Activated naive CD4-positive, alpha-beta T cell treated with anti-CD3 and anti-CD28 coated beads for 36 hours (primary cell): ENCODE measurements at regions of chr11 and their contacts with region 1.

Region 1: DNA sequence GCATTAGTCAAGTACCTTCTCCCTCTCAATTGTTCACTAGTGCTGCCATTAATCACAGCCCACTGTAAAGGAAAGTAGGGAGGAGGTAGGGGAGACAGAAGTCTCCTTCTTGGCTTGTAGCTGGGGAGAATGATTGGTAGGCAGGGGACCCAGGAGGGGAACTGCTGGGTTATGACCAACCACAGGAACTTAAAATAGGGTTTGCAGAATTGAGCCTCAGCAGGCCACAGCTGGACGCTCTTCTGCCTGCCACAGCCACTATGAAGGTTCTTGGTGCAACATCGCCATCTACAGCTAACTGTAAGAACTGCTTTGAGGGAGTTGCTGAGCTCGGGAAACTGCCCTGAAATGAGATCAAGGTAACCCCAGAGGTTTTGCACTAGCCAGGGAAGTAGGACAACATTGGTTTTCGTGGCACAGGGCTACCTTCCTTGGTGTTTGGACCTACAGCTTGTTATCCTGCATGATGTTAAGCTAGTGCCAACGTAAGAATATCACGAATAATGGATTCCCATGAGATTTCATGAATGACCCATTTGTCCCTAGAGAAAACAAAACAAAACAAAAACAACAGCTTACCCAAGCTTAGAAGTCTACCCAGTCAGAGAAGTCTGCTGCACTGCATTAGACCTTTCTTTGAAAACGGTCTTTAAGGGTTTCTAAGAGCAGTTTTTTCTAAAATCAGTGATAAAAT is 787.1 kb upstream of the API5 start:
- DNase-seq: peak; percentile 49
- H3K4me3 Mint-ChIP-seq: no peak overlapping the region
- H3K27ac Mint-ChIP-seq: no peak overlapping the region
- H3K4me1 Mint-ChIP-seq: no peaks in the 10 kb centered on the region
- H3K27me3 Mint-ChIP-seq: no peaks in the 10 kb centered on the region

Region 2: DNA sequence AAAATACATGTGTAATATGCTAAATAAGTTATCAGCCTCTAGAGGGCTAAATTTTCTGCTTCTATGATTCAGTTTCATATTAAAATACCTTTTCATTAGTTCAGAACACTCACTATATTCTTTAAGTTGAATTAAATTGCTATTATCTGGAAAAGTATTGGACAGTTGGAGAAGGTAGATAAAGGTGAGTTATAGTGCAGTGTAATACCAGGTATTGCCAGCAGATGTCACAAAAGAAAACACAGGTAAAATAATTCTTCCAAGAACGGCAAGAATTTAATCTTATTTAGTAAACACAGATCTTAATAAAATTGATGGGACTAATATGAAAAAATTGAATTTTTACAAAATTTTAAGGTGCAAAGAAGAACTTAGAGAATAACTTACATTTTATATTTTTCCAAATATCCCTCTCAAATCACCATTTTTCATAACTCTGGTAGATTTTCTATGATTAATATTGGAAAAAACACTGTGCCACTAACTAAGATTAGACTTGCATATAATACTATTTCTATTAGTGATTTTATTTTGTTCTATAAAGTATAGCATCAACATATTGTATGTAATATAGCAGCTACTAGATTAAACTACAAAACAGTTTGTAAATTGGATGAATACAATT is 1063.5 kb before region 1 on chr11:
- CTCF ChIA-PET with region 1: interaction called, 8 read pairs
- intact Hi-C with region 1: loop called (anchors 1 kb)
- DNase-seq: no peak
- H3K4me3 Mint-ChIP-seq: no peak overlapping the region
- H3K27ac Mint-ChIP-seq: no peak overlapping the region
- H3K4me1 Mint-ChIP-seq: no peaks in the 10 kb centered on the region
- H3K27me3 Mint-ChIP-seq: peaks cover 12% of the 10 kb centered on the region

Region 3: DNA sequence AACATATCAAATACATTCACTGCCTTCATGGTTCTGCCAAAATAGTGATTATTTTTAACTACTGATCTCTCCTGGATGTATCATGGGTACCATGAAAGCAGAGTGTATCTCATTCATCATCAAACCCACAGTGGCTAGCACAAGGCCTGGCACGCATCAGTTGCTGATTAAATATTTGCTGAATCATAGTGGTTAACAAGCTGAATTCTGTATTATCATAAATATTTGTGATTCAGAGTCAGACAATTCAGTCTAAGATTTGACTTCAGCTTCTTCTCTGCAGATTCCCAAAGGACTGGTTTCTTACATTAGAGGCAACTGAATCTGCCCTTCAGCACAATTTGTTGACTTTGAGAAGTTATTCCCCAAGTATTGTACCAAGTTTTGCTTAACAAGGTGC is 349.5 kb before region 1 on chr11:
- CTCF ChIA-PET with region 1: no interaction called
- intact Hi-C with region 1: no loop called
- DNase-seq: no peak
- H3K4me3 Mint-ChIP-seq: no peak overlapping the region
- H3K27ac Mint-ChIP-seq: no peak overlapping the region
- H3K4me1 Mint-ChIP-seq: no peaks in the 10 kb centered on the region
- H3K27me3 Mint-ChIP-seq: no peaks in the 10 kb centered on the region

Region 4: GRCh38 chr11:42786981-42787380 is 262.3 kb after region 1 on chr11:
- CTCF ChIA-PET with region 1: no interaction called
- intact Hi-C with region 1: no loop called
- DNase-seq: no peak
- H3K4me3 Mint-ChIP-seq: no peak overlapping the region
- H3K27ac Mint-ChIP-seq: no peak overlapping the region
- H3K4me1 Mint-ChIP-seq: no peaks in the 10 kb centered on the region
- H3K27me3 Mint-ChIP-seq: no peaks in the 10 kb centered on the region

Region 5: GRCh38 chr11:42923651-42924050 is 399.0 kb after region 1 on chr11:
- CTCF ChIA-PET with region 1: no interaction called
- intact Hi-C with region 1: no loop called
- DNase-seq: no peak
- H3K4me3 Mint-ChIP-seq: no peak overlapping the region
- H3K27ac Mint-ChIP-seq: no peak overlapping the region
- H3K4me1 Mint-ChIP-seq: no peaks in the 10 kb centered on the region
- H3K27me3 Mint-ChIP-seq: no peaks in the 10 kb centered on the region